ENCODE measurements at regions of chr15 and their contacts with region 1.

Region 1: GRCh38 chr15:81296673-81297072 is 27.3 kb downstream of the STARD5 start:
- DNase-seq: peak; percentile 86
- ATAC-seq: peak; percentile 54
- H3K4me3 Mint-ChIP-seq: peak overlapping the region; percentile 94
- H3K27ac Mint-ChIP-seq: peak overlapping the region; percentile 98
- H3K4me1 Mint-ChIP-seq: peaks cover 62% of the 10 kb centered on the region
- H3K27me3 Mint-ChIP-seq: no peaks in the 10 kb centered on the region

Region 2: DNA sequence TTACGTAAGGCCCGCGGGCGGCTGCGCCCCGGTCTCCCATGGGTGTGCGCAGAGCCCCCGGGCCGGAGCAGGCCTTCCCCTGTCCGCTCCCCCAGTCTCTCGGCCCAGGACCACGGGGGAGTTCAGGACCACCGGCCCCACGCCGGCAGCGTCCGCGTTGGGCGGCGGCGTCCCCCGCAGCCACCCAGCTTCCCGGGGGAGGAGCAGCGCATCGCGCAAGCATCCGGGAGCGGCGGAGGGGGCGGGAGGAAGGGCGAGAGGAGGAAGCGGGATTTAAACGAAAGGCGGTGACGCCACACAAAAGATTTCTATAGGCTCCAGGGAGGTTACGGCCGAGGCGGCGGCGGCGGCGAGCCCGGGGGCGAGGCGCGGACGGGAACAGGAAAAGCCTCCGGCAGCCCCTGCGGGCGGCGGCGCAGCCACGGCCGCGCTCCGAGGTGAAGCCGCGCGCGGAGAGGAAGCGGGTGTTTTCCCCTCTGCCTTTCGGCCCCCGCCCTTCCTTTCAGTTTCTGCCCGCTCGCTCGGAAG is 296.0 kb before region 1 on chr15 and contains the start of gene TLNRD1:
- CTCF ChIA-PET with region 1: no interaction called
- POLR2A ChIA-PET with region 1: no interaction called
- intact Hi-C with region 1: loop called (anchors 1 to 10 kb)
- DNase-seq: peak; percentile 90
- ATAC-seq: peak; percentile 70
- H3K4me3 Mint-ChIP-seq: peak within 1 kb of the TSS; percentile 92
- H3K27ac Mint-ChIP-seq: peak within 1 kb of the TSS; percentile 92
- H3K4me1 Mint-ChIP-seq: peaks cover 45% of the 10 kb centered on the region
- H3K27me3 Mint-ChIP-seq: no peaks in the 10 kb centered on the region
- total RNA-seq, gene TLNRD1: 11.2 to 16.9 TPM

Region 3: GRCh38 chr15:81286621-81287121 is 10.0 kb before region 1 on chr15:
- CTCF ChIA-PET with region 1: interaction called, 14 read pairs
- POLR2A ChIA-PET with region 1: interaction called, 5 read pairs
- intact Hi-C with region 1: loop called in 1 of 2 experiments (anchors 1 kb)
- DNase-seq: no peak
- ATAC-seq: peak; percentile 83
- H3K4me3 Mint-ChIP-seq: peak overlapping the region; percentile 71
- H3K27ac Mint-ChIP-seq: peak overlapping the region; percentile 97
- H3K4me1 Mint-ChIP-seq: peaks cover 77% of the 10 kb centered on the region
- H3K27me3 Mint-ChIP-seq: no peaks in the 10 kb centered on the region

Region 4: DNA sequence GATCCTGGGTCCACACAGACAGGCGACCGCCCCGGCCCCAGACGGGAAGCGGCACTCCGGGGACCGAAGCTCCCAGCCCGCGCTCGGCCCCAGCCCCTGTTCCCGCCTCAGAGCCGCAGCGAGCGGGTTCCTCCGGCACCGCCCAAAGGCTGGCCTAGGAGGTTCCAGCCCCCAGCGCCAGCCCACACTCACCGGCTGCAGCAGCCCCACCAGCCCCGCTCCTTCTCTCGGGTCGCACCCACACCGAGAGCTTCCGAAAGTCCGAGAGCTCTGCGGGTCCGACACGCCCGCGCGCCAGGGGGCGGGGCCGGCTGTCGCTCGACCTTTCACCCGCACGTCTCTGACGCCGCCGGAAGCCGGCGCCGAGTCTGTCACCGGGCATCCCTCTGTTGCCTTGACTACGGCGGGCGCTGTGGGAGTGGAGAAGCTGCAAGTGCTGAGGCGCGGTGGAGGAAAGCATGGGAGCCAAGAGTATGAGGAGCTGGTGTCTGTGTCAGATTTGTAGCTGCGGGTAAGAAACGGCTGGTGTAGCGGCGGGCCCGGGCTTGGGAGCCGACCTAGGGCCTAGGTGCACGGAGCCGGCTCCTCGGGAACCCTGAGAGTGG is 965.9 kb after region 1 on chr15 and contains the starts of genes EFL1 and SAXO2:
- CTCF ChIA-PET with region 1: no interaction called
- POLR2A ChIA-PET with region 1: no interaction called
- intact Hi-C with region 1: loop called in 1 of 2 experiments (anchors 5 kb)
- DNase-seq: peak; percentile 94
- ATAC-seq: peak; percentile 91
- H3K4me3 Mint-ChIP-seq: peak within 1 kb of the TSS; percentile 89
- H3K27ac Mint-ChIP-seq: peak within 1 kb of the TSS; percentile 91
- H3K4me1 Mint-ChIP-seq: peaks cover 33% of the 10 kb centered on the region
- H3K27me3 Mint-ChIP-seq: no peaks in the 10 kb centered on the region
- total RNA-seq, gene EFL1: 25.0 to 30.2 TPM
- total RNA-seq, gene SAXO2: 4.4 to 6.9 TPM